Panc1 (cell line): ENCODE measurements at regions of chr16 and their contacts with region 1.

Region 1: GRCh38 chr16:24729362-24729984 is at the start of gene TNRC6A:
- DNase-seq: no peak
- ATAC-seq: peak; percentile 98
- H3K4me3 ChIP-seq: peak within 1 kb of the TSS; percentile 82 to 85
- H3K27ac ChIP-seq: peak within 1 kb of the TSS; percentile 97
- H3K4me1 ChIP-seq: peaks cover 25% of the 10 kb centered on the region
- H3K27me3 ChIP-seq: no peaks in the 10 kb centered on the region
- CTCF ChIP-seq: no peak
- total RNA-seq, gene TNRC6A: 53.6 TPM

Region 2: GRCh38 chr16:23538919-23539278 is 1190.6 kb before region 1 on chr16:
- CTCF ChIA-PET with region 1: no interaction called
- POLR2A ChIA-PET with region 1: interaction called, 12 read pairs
- in situ Hi-C with region 1: no loop called
- intact Hi-C with region 1: no loop called
- DNase-seq: no peak
- ATAC-seq: no peak
- H3K4me3 ChIP-seq: no peak overlapping the region
- H3K27ac ChIP-seq: no peak overlapping the region
- H3K4me1 ChIP-seq: no peaks in the 10 kb centered on the region
- H3K27me3 ChIP-seq: no peaks in the 10 kb centered on the region
- CTCF ChIP-seq: no peak

Region 3: GRCh38 chr16:24580665-24581064 is 148.8 kb before region 1 on chr16:
- CTCF ChIA-PET with region 1: no interaction called
- POLR2A ChIA-PET with region 1: no interaction called
- in situ Hi-C with region 1: no loop called
- intact Hi-C with region 1: loop called (anchors 10 kb)
- DNase-seq: peak; percentile 15
- ATAC-seq: peak; percentile 37; the same call in 1 of the 2 replicates
- H3K4me3 ChIP-seq: no peak overlapping the region
- H3K27ac ChIP-seq: no peak overlapping the region
- H3K4me1 ChIP-seq: no peaks in the 10 kb centered on the region
- H3K27me3 ChIP-seq: no peaks in the 10 kb centered on the region
- CTCF ChIP-seq: no peak; the same call in 1 of the 2 replicates

Region 4: GRCh38 chr16:24670623-24671454 is 58.6 kb before region 1 on chr16:
- CTCF ChIA-PET with region 1: no interaction called
- POLR2A ChIA-PET with region 1: interaction called, 12 read pairs
- in situ Hi-C with region 1: no loop called
- intact Hi-C with region 1: no loop called
- DNase-seq: no peak
- ATAC-seq: peak; percentile 79
- H3K4me3 ChIP-seq: peak overlapping the region; percentile 3 to 17; a peak in 2 of 4 replicates
- H3K27ac ChIP-seq: peak overlapping the region; percentile 80
- H3K4me1 ChIP-seq: peaks cover 26% of the 10 kb centered on the region
- H3K27me3 ChIP-seq: no peaks in the 10 kb centered on the region
- CTCF ChIP-seq: no peak

Region 5: GRCh38 chr16:24776501-24777220 is 47.2 kb after region 1 on chr16:
- CTCF ChIA-PET with region 1: no interaction called
- POLR2A ChIA-PET with region 1: no interaction called
- in situ Hi-C with region 1: no loop called
- intact Hi-C with region 1: no loop called
- DNase-seq: no peak
- ATAC-seq: no peak
- H3K4me3 ChIP-seq: no peak overlapping the region
- H3K27ac ChIP-seq: no peak overlapping the region
- H3K4me1 ChIP-seq: peaks cover 15% of the 10 kb centered on the region; the same call in 1 of the 2 replicates
- H3K27me3 ChIP-seq: no peaks in the 10 kb centered on the region
- CTCF ChIP-seq: no peak